ENCODE measurements at regions of chr20 and their contacts with region 1.

Region 1: DNA sequence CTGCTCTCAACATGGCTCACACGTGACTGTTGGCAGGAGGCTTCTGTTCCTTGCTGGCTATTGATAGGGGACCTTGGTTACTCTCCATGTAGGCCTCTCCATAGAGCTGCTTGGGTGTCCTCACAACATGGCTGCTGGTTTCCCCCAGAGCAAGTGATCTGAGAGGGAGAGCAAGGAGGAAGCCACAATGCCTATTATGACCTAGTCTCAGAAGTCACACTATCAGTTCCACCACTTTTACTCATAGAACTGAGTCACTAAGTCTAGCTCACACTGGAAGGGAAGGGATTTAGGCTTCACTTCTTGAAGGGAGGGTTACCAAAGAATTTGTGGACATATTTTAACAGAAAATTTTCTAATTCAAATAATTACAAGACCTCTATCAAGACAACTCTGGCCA is 8.7 kb upstream of the NOP56 start:
- DNase-seq: no peak
- H3K4me3 ChIP-seq: no peak overlapping the region
- H3K27ac ChIP-seq: no peak overlapping the region
- H3K4me1 ChIP-seq: no peaks in the 10 kb centered on the region
- H3K27me3 ChIP-seq: no peaks in the 10 kb centered on the region
- CTCF ChIP-seq: no peak
- EP300 ChIP-seq: no peak
- POLR2A ChIP-seq: no peak

Region 2: GRCh38 chr20:1696521-1697209 is 947.0 kb before region 1 on chr20:
- in situ Hi-C with region 1: no loop called
- intact Hi-C with region 1: no loop called
- DNase-seq: no peak
- H3K4me3 ChIP-seq: no peak overlapping the region
- H3K27ac ChIP-seq: no peak overlapping the region
- H3K4me1 ChIP-seq: no peaks in the 10 kb centered on the region
- H3K27me3 ChIP-seq: no peaks in the 10 kb centered on the region
- CTCF ChIP-seq: no peak
- EP300 ChIP-seq: no peak
- POLR2A ChIP-seq: no peak

Region 3: DNA sequence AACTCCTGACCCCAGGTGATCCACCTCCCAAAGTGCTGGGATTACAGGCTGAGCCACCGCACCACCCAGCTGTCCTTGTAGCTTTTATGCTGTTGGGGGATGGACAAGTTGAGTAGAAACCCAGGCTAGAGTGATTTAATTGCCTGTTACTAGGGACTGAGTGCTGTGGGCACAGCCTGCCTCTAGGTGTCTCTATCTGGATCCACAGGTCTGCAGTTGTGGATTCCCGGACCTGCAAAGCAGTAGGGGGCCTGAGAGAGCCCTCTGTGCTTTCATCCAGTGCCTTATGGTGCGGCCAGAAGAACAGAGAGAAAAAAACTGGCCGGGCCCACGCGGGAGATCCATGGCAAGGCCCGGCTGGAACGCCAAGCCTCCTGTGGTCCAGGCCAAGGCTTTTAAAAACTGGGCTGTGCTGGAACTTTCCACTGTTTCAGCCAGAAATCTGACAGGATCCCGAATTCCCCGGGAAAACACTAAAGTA is 743.3 kb before region 1 on chr20:
- in situ Hi-C with region 1: no loop called
- intact Hi-C with region 1: no loop called
- DNase-seq: peak; percentile 33
- H3K4me3 ChIP-seq: no peak overlapping the region
- H3K27ac ChIP-seq: peak overlapping the region in 2 of 4 donors; percentile 19 to 30
- H3K4me1 ChIP-seq: peaks cover 0 to 44% (median 14%) of the 10 kb centered on the region in 4 donors
- H3K27me3 ChIP-seq: peaks cover 8% of the 10 kb centered on the region
- CTCF ChIP-seq: peak; percentile 17 to 52 (median 29)
- EP300 ChIP-seq: no peak
- POLR2A ChIP-seq: no peak

Region 4: DNA sequence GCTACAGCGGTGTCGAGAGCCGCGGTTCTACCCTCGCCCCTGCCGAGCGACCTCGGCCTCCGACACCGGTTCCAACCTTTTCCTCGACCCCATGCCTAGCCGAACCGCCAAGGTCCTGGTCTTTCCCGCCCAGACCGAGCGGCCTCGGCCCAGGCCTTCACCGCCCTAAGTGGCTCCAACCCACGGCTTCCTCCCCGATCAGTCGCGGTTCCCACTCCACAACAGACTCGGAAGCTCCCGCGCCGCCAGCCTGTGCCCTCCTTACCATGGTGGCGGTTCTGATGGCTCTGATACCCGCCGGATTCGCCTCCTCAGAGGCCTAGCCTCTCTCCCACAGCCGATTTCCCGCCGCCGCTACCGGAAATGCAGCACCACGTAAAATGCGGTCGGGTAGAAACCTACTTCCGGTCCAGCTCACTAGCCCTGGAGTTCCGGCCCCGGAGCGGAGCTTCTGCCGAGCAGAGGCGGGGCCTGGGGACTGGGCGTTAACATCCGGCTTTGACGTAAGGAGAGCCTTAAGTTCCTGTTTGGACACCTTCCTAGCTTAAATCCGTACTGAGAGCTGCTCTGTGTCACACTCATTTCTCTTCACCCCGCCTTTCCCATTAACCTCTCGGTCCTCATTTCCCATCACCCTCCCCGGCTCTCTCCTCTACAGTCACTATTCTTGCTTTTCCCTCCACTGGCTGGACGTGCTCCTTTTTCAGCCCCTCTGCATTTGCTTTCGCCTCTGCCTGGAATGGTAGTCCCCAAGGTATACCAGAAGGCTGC is 173.1 kb before region 1 on chr20 and contains the start of gene SNRPB:
- in situ Hi-C with region 1: loop called in 1 of 4 experiments (anchors 10 kb)
- intact Hi-C with region 1: no loop called
- DNase-seq: peak; percentile 98
- H3K4me3 ChIP-seq: peak within 1 kb of the TSS; percentile 64 to 81 (median 72)
- H3K27ac ChIP-seq: peak within 1 kb of the TSS; percentile 92 to 96 (median 92)
- H3K4me1 ChIP-seq: peaks cover 12 to 25% (median 17%) of the 10 kb centered on the region in 4 donors
- H3K27me3 ChIP-seq: no peaks in the 10 kb centered on the region
- CTCF ChIP-seq: peak in 1 of 5 experiments; percentile 8
- EP300 ChIP-seq: no peak
- POLR2A ChIP-seq: peak; percentile 91
- total RNA-seq, gene SNRPB: 50.9 to 144 (median 125) TPM

Region 5: GRCh38 chr20:2523919-2524708 is 119.6 kb before region 1 on chr20:
- in situ Hi-C with region 1: loop called in 2 of 4 experiments (anchors 10 kb)
- intact Hi-C with region 1: no loop called
- DNase-seq: peak; percentile 91
- H3K4me3 ChIP-seq: peak overlapping the region; percentile 51 to 82 (median 78)
- H3K27ac ChIP-seq: peak overlapping the region; percentile 77 to 93 (median 90)
- H3K4me1 ChIP-seq: peaks cover 0 to 5% (median 2%) of the 10 kb centered on the region in 4 donors
- H3K27me3 ChIP-seq: no peaks in the 10 kb centered on the region
- CTCF ChIP-seq: peak; percentile 96 to 98 (median 96)
- EP300 ChIP-seq: no peak
- POLR2A ChIP-seq: peak; percentile 57

Region 6: GRCh38 chr20:2538931-2539720 is 104.6 kb before region 1 on chr20:
- in situ Hi-C with region 1: no loop called
- intact Hi-C with region 1: loop called (anchors 10 kb)
- DNase-seq: no peak
- H3K4me3 ChIP-seq: no peak overlapping the region
- H3K27ac ChIP-seq: no peak overlapping the region
- H3K4me1 ChIP-seq: no peaks in the 10 kb centered on the region
- H3K27me3 ChIP-seq: peaks cover 20% of the 10 kb centered on the region
- CTCF ChIP-seq: no peak
- EP300 ChIP-seq: no peak
- POLR2A ChIP-seq: no peak